ENCODE measurements at regions of chr18 and their contacts with region 1.

Region 1: DNA sequence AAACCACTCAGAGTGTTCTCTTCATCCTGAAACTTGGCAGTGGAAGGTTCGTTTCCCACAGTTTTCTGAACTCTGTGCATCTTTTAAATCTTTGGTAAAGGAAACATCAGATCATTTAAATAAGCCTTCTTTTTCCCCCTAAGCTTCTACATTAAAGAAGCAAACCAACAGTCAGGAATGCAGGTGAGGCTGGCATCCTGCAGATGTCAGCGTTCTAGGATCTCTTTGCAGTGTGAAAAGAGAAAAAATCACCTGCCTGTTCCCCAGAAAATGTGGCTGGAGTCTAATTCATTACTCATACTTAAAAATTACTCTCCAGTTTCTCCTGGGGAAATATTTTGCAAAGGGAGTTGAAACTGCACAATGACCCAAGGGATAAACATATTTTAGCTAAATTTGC is 64.5 kb upstream of the ZCCHC2 start:
- DNase-seq: no peak
- ATAC-seq: no peak
- H3K4me3 ChIP-seq: no peak overlapping the region
- H3K27ac ChIP-seq: peak overlapping the region in 2 of 12 donors; percentile 40 to 49
- H3K4me1 ChIP-seq: peaks cover 0 to 19% (median 0%) of the 10 kb centered on the region in 12 donors
- H3K27me3 ChIP-seq: no peaks in the 10 kb centered on the region
- CTCF ChIP-seq: no peak
- POLR2A ChIP-seq: no peak

Region 2: GRCh38 chr18:62505669-62506494 is 47.5 kb after region 1 on chr18:
- intact Hi-C with region 1: loop called in 2 of 10 experiments (anchors 5 to 10 kb)
- DNase-seq: no peak
- ATAC-seq: peak in 2 of 4 donors; percentile 43 to 47
- H3K4me3 ChIP-seq: peak overlapping the region in 11 of 12 donors; percentile 1 to 54 (median 47)
- H3K27ac ChIP-seq: peak overlapping the region; percentile 24 to 93 (median 70)
- H3K4me1 ChIP-seq: peaks cover 0 to 30% (median 0%) of the 10 kb centered on the region in 12 donors
- H3K27me3 ChIP-seq: no peaks in the 10 kb centered on the region
- CTCF ChIP-seq: no peak
- POLR2A ChIP-seq: no peak